Panc1 (cell line): ENCODE measurements at regions of chr12 and their contacts with region 1.

Region 1: GRCh38 chr12:100266835-100267618 is at the starts of genes DEPDC4 and SCYL2:
- DNase-seq: peak; percentile 78
- ATAC-seq: peak; percentile 95
- H3K4me3 ChIP-seq: peak within 1 kb of the TSS; percentile 60 to 91
- H3K27ac ChIP-seq: peak within 1 kb of the TSS; percentile 76
- H3K4me1 ChIP-seq: peaks cover 8% of the 10 kb centered on the region; the same call in 1 of the 2 replicates
- H3K27me3 ChIP-seq: no peaks in the 10 kb centered on the region
- CTCF ChIP-seq: no peak
- total RNA-seq, gene DEPDC4: 2.6 TPM
- total RNA-seq, gene SCYL2: 45.3 TPM

Region 2: GRCh38 chr12:100185361-100185894 is 81.6 kb before region 1 on chr12:
- CTCF ChIA-PET with region 1: no interaction called
- POLR2A ChIA-PET with region 1: no interaction called
- in situ Hi-C with region 1: no loop called
- intact Hi-C with region 1: no loop called
- DNase-seq: no peak
- ATAC-seq: no peak
- H3K4me3 ChIP-seq: no peak overlapping the region
- H3K27ac ChIP-seq: no peak overlapping the region
- H3K4me1 ChIP-seq: no peaks in the 10 kb centered on the region
- H3K27me3 ChIP-seq: no peaks in the 10 kb centered on the region
- CTCF ChIP-seq: no peak

Region 3: GRCh38 chr12:100329800-100330199 is 62.8 kb after region 1 on chr12:
- CTCF ChIA-PET with region 1: interaction called, 10 read pairs
- POLR2A ChIA-PET with region 1: no interaction called
- in situ Hi-C with region 1: no loop called
- intact Hi-C with region 1: no loop called
- DNase-seq: no peak
- ATAC-seq: no peak
- H3K4me3 ChIP-seq: no peak overlapping the region
- H3K27ac ChIP-seq: no peak overlapping the region
- H3K4me1 ChIP-seq: no peaks in the 10 kb centered on the region
- H3K27me3 ChIP-seq: no peaks in the 10 kb centered on the region
- CTCF ChIP-seq: no peak

Region 4: DNA sequence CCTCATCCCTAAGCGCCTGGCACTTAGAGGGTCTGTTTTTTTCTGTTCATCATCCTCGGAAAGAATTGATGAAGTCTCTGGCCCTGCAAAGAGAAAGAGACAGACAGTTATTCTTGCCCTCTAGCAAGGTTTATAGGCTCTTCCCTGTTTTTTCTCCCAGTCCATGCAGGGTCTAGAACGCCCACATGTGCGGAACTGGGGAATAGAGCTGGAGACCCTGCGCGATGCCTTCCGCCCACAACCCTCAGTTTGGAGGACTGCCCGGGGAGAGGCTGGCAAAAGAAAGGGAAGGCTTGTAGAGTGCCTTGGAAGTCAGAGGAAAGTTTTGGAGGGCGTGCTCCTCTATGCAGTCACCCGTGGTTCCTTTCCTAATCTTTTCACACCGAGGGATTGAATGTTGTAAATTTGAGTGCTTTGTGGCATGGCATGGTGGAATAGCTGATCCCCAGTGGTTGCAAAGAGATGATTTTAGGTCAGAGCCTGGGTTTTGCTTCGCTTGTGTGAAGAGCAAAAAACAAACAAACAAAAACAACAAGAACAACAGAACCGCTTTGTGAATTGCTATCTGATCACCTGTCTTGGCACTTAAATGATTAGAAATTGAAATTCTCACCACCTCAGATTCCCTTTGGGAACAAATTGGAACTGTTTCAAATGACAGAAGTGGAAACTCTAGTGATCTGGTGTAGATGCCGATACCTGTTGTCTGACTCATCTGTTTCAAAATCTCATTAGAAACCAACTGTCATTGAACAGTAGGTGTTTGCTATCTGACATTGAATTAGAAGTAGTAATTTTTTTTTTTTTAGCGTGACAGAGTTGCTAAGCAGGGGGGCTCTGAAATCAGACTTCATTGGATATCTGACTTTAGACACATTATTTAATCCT is 307.4 kb after region 1 on chr12:
- CTCF ChIA-PET with region 1: no interaction called
- POLR2A ChIA-PET with region 1: interaction called, 13 read pairs
- in situ Hi-C with region 1: no loop called
- intact Hi-C with region 1: no loop called
- DNase-seq: no peak
- ATAC-seq: peak; percentile 27
- H3K4me3 ChIP-seq: peak overlapping the region; percentile 95 to 96
- H3K27ac ChIP-seq: peak overlapping the region; percentile 95
- H3K4me1 ChIP-seq: peaks cover 16% of the 10 kb centered on the region
- H3K27me3 ChIP-seq: no peaks in the 10 kb centered on the region
- CTCF ChIP-seq: no peak